Prostate gland (tissue), 2 donors: ENCODE measurements at regions of chr9 and their contacts with region 1.

Region 1: DNA sequence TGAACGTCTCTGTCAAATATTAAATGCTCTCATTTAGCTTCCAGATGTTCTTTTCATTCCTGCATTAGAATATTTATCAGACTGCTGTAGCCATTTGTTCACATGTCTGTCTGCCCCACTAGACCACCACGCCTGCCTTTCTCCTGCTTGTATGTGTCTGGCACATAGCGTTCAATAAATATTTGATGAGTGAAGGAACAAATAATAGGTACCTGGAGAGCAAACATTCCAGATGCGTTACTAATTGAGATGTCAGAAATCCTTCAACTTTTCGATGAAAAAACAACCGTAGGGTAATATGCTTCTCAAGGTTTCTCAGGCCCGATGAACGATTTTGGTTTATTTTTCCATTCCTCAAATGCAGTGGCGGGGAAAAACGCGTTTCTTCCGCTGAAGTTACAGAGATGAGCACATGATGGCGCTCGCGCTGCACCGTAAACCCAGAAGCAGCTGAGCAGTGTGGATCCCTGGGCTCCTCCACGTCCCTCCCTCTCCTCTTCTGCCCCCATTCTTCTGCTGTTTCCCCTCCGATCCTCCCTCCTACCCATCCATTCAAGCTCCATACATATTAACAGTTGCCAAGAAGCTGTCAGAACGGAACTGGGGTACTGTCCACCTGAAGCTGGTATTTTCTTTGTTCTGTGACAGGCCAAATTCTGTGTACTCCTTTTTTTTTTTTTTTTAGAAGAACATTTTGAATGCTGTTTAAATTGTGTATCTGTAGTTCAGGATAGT is 245.4 kb downstream of the MPDZ start:
- DNase-seq: peak; percentile 67
- H3K4me3 ChIP-seq: peak overlapping the region in 1 of 2 donors; percentile 16
- H3K27ac ChIP-seq: peak overlapping the region; percentile 67 to 75
- H3K4me1 ChIP-seq: peaks cover 3% of the 10 kb centered on the region
- H3K27me3 ChIP-seq: no peaks in the 10 kb centered on the region
- CTCF ChIP-seq: peak; percentile 56 to 90 (median 76)
- POLR2A ChIP-seq: no peak

Region 2: GRCh38 chr9:12065050-12065449 is 969.1 kb before region 1 on chr9:
- intact Hi-C with region 1: no loop called
- DNase-seq: no peak
- H3K4me3 ChIP-seq: no peak overlapping the region
- H3K27ac ChIP-seq: no peak overlapping the region
- H3K4me1 ChIP-seq: no peaks in the 10 kb centered on the region
- H3K27me3 ChIP-seq: no peaks in the 10 kb centered on the region
- CTCF ChIP-seq: no peak
- POLR2A ChIP-seq: no peak

Region 3: DNA sequence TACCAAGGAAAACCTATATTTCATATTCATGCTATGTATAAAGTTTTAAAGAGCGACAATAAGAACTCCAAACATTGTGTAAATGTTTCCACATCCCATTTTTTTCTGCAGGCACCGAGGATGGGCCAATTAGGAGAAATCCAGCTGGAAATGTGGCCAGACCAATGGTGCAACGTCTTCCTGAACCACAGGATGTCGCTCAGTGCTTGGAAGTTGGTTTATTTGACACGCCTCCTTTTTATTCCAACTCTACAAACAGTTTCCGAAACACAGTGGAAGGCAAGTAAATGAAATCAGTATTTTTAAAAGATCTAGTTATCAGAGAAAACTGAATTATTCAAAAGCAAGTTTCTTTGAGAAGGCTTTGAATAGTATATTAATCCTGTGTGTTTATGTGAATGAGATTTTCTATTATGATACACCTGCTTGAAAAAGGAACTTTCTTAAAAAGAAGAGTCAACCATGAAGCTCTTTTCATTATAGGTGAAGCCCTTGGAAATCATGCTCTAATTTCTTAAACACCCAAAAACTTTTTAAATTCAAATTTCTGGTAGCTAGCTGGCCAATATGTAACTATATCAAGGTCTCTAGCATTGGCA is 331.9 kb before region 1 on chr9:
- intact Hi-C with region 1: no loop called
- DNase-seq: peak; percentile 16
- H3K4me3 ChIP-seq: no peak overlapping the region
- H3K27ac ChIP-seq: no peak overlapping the region
- H3K4me1 ChIP-seq: no peaks in the 10 kb centered on the region
- H3K27me3 ChIP-seq: no peaks in the 10 kb centered on the region
- CTCF ChIP-seq: peak in 3 of 4 experiments; percentile 12 to 54 (median 37)
- POLR2A ChIP-seq: no peak

Region 4: GRCh38 chr9:12980085-12980851 is 53.9 kb before region 1 on chr9:
- intact Hi-C with region 1: no loop called
- DNase-seq: no peak
- H3K4me3 ChIP-seq: no peak overlapping the region
- H3K27ac ChIP-seq: no peak overlapping the region
- H3K4me1 ChIP-seq: no peaks in the 10 kb centered on the region
- H3K27me3 ChIP-seq: no peaks in the 10 kb centered on the region
- CTCF ChIP-seq: no peak
- POLR2A ChIP-seq: no peak

Region 5: DNA sequence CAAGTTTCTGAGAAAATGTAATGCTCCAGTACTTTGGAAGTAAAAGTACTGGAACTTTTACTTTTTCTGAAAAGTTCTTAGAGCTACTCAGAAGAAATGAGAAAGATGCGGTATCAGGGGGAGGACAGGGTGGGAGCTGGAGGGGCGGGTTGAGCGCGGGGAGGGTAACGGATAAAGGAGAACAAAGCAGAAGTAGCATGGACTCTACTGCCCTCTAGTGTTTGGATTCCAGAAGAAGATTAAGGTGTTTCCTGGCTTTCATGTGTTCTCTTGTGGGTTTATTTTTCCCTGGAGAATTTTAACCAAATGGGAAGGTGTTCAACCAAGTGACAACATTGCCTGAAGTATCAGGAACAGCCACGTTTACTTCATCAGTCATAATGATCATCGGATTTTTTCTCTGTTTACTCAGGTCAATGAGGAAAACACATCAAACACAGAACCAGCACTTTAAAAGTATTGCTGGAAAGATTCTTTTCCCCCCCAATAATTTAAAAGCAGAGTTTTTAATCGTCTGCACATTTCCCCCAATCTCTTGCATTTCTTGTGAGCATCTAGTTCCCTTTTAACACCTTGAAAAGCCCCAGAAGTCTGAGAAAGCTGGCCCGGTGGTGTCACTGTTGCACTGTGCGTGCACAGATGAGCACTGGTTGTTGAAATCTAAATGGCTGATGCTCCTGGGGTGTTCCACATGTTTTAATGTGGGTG is 54.7 kb after region 1 on chr9:
- intact Hi-C with region 1: loop called (anchors 5 kb)
- DNase-seq: peak; percentile 43
- H3K4me3 ChIP-seq: no peak overlapping the region
- H3K27ac ChIP-seq: peak overlapping the region in 1 of 2 donors; percentile 6
- H3K4me1 ChIP-seq: peaks cover 6% of the 10 kb centered on the region
- H3K27me3 ChIP-seq: no peaks in the 10 kb centered on the region
- CTCF ChIP-seq: peak; percentile 53 to 90 (median 69)
- POLR2A ChIP-seq: no peak

Region 6: DNA sequence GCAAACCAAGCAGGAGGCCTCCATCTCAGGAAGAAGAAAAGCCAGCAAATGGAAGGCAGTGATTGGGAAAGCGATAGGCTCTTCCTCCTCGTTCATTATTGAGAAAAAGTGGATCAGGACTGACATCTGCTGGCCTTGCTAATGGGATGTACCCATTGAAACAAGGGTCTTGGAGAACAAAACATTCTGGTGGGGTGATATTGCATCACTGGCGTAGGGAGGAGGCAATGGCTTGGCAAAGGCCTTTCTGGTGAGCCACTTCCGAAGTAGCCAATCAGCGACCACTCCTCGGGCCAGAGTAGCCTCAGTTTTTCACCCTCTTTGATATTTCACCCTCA is 1366.5 kb after region 1 on chr9:
- intact Hi-C with region 1: loop called (anchors 10 kb)
- DNase-seq: no peak
- H3K4me3 ChIP-seq: no peak overlapping the region
- H3K27ac ChIP-seq: no peak overlapping the region
- H3K4me1 ChIP-seq: peaks cover 2% of the 10 kb centered on the region
- H3K27me3 ChIP-seq: no peaks in the 10 kb centered on the region
- CTCF ChIP-seq: peak in 2 of 4 experiments; percentile 21 to 52
- POLR2A ChIP-seq: no peak